CD8-positive, alpha-beta T cell (primary cell): ENCODE measurements at regions of chr6 and their contacts with region 1.

Region 1: DNA sequence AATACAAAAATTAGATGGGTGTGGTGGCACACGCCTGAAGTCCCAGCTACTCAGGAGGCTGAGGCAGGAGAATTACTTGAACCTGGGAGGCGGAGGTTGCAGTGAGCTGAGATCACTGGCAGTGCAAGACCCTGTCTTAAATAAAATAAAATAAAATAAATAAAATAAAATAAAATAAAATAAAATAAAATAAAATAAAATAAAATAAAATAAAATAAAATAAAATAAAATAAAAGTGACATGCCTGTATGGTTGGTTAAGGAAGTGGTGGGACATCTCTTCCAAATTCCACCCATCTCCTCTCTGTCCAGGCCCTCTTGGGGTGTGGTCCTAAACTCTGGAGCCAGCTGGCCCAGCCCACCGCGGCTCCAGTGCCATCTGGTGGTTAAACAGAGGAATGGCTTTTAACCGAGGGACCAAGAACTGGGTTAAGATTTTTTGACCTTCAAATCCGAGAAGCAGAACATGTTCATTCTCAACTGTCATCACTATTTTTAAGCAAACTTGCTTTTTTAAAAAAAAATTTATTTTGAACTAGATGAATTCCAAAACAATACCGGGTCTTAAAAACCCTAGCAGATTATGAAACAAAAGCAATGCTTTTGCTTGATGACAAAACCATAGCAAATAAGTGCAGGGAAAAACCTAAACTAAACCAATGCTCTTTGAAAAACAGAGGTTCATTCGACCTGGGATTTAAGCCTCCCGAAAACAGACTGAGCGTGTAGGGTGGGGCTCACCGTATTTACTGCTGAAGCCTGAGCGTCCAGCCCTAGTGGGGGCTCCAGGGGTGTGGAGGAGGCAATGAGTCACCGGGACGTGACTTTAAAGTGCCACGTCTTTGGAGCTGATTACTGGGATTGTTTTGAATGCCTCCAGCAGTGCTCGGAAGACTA is 68.8 kb downstream of the CDC5L start:
- DNase-seq: peak in 6 of 9 experiments; percentile 7 to 64 (median 36)
- ATAC-seq: peak; percentile 62
- H3K4me3 ChIP-seq: no peak overlapping the region
- H3K4me3 Mint-ChIP-seq: no peak overlapping the region
- H3K27ac ChIP-seq: no peak overlapping the region
- H3K27ac Mint-ChIP-seq: no peak overlapping the region
- H3K4me1 ChIP-seq: no peaks in the 10 kb centered on the region
- H3K4me1 Mint-ChIP-seq: no peaks in the 10 kb centered on the region
- H3K27me3 ChIP-seq: no peaks in the 10 kb centered on the region
- H3K27me3 Mint-ChIP-seq: no peaks in the 10 kb centered on the region
- CTCF ChIP-seq: peak; percentile 69

Region 2: DNA sequence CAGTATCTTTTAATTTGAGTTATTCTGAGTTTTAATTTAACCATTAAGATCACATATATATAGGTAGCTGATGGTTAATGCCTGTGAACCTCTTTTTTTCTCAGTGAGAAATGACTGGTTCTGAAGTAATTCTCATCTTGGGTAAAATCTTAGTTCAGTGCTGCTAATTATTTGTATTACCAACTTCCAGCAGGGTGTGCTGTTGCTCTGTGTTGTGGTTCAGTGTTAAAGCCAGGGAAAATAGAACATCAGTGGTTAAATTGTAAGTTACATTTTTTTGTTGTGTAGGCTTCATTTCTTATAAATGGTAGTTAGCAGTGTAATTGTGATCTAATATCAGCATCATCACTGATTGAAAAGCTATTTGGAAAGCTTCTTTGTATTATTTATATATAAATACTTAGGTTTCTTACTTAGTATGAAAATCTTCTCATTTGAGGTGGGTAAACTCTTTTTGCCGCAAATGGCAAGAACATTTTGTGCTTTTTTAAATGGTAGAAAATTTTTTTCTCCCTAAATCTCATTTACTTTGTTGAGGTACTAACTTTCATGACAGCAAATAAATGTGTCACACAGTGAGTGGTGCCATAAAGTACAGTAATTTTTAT is 25.1 kb before region 1 on chr6:
- CTCF ChIA-PET with region 1: interaction called, 15 read pairs
- POLR2A ChIA-PET with region 1: no interaction called
- intact Hi-C with region 1: loop called (anchors 1 kb)
- DNase-seq: peak in 7 of 9 experiments; percentile 5 to 62 (median 30)
- ATAC-seq: peak; percentile 57
- H3K4me3 ChIP-seq: no peak overlapping the region
- H3K4me3 Mint-ChIP-seq: no peak overlapping the region
- H3K27ac ChIP-seq: no peak overlapping the region
- H3K27ac Mint-ChIP-seq: no peak overlapping the region
- H3K4me1 ChIP-seq: no peaks in the 10 kb centered on the region
- H3K4me1 Mint-ChIP-seq: peaks cover 9% of the 10 kb centered on the region
- H3K27me3 ChIP-seq: no peaks in the 10 kb centered on the region
- H3K27me3 Mint-ChIP-seq: no peaks in the 10 kb centered on the region
- CTCF ChIP-seq: peak; percentile 71